ENCODE measurements at regions of chr7 and their contacts with region 1.

Region 1: GRCh38 chr7:2451171-2452073 is 24.8 kb downstream of the GRIFIN start:
- DNase-seq: no peak
- H3K4me3 ChIP-seq: no peak overlapping the region
- H3K27me3 ChIP-seq: no peaks in the 10 kb centered on the region
- CTCF ChIP-seq: peak; percentile 96

Region 2: DNA sequence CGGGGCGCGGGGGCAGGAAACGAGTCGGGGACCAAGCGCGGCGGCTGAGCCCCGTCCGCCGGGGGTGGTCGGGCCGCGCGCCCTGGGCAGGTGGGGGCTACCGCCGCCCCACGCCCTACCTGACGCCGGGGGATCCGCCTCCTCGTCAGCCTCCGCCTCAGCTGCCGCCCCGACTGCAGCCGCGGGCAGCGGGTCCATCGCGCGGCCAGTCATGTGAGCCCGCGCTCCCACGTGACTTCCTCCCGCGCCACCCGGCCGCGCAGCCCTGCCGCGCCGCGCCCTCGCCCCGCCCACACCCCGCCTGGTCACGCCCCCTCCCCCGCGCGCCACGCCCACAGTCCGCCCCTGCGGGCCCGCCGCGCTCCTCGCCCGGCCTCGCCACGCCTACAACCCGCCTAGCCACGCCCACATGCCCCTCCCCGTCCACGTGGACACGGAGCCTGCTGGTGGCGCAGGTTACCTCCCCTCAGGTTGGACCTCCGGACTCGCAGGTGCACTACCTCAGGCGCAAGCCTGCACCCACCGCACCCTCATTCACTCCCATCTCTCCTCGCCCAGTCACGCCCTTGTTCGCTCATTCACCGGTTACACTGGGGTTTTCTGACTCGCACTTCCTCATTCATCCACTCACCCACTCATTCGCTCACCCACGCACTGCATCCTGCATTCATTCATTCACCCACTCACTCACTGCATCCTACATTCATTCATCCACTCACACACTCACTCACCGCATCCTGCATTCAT is 137.0 kb before region 1 on chr7 and contains the start of gene SNX8:
- CTCF ChIA-PET with region 1: no interaction called
- POLR2A ChIA-PET with region 1: no interaction called
- DNase-seq: no peak
- H3K4me3 ChIP-seq: peak within 1 kb of the TSS; percentile 76
- H3K27me3 ChIP-seq: no peaks in the 10 kb centered on the region
- CTCF ChIP-seq: 0 out of 2 replicates have a peak, but pooled peaks have one; percentile 8
- polyA plus RNA-seq, gene SNX8: 36.9 and 62.1 TPM in 2 replicates

Region 3: GRCh38 chr7:2465928-2466327 is 14.5 kb after region 1 on chr7:
- CTCF ChIA-PET with region 1: interaction called, 82 read pairs
- POLR2A ChIA-PET with region 1: no interaction called
- DNase-seq: no peak
- H3K4me3 ChIP-seq: no peak overlapping the region
- H3K27me3 ChIP-seq: peaks cover 2% of the 10 kb centered on the region
- CTCF ChIP-seq: no peak